Ascending aorta (tissue), 2 donors: ENCODE measurements at regions of chr3 and their contacts with region 1.

Region 1: DNA sequence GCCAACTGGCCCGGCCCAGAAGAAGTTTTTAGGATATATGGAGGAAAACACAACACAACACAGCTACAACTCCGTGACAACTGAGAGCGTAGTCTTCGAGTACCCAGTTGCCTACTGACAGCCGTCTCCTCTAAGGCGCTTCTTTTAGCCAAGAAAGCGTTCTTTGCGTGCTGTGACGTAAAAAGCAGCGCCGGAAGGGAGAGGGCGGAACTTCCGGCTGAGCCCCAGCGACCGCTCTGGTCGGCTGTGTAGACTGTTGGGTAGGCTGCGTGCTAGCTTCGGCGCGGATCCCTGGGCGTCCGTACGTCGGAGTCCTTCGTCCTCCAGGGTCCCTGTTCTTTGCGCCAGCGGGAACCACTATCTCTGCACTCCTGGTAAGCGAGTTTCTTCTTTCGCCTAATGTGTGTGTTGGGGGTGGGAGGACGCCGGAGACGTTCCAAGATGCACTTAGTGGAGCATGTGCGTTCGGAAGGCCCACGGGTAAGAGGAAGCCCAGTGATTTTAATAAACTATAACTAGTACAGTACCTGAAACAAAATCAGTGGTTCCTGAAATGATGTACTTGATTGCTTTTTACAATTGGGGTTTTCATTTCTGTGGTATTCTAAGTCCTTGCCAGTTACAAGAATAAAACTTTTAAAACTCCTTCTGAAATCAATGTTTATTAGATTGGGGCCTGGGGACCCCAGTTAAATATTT is at the start of gene TRMT10C:
- DNase-seq: peak; percentile 60 to 95
- H3K4me3 ChIP-seq: peak within 1 kb of the TSS; percentile 84 to 94
- H3K27ac ChIP-seq: peak within 1 kb of the TSS; percentile 89 to 92
- H3K4me1 ChIP-seq: peaks cover 0 to 10% of the 10 kb centered on the region in 2 donors
- H3K27me3 ChIP-seq: no peaks in the 10 kb centered on the region
- CTCF ChIP-seq: no peak
- total RNA-seq, gene TRMT10C: 5.9 TPM

Region 2: DNA sequence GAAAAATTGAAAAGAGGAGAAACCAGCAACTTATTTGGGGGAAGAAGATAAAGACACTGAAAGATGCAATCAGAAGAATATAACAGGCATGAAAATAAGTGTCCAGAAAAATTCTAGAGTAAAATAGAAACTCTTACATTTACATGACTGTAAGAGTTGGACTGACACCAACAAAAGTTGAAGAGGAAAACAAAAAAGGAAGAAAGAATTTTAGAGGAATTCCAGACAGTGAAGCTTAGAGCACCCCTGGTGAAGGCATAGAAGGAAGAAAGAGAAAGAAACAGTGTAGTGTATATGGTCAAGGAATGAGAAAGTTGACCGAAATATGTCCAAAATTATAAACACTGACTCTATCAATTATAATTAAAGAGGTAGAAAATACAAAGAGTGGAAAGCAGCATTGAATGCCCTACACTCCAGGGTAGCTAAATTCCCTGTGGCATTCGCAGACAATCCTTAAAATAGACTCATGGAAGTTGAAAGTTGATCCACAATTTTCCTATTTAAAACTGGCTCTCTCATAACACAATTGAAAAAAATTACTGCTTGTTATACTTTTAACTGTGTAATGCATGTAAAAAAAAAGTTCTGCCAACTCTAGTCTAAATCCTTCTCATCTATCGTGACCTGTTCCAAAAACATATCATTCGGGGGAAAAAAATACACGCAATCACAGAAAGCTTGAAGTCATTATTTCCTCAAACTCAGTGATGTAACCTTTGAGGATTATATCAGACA is 465.9 kb before region 1 on chr3:
- intact Hi-C with region 1: no loop called
- DNase-seq: no peak
- H3K4me3 ChIP-seq: peak overlapping the region in 1 of 2 donors; percentile 7
- H3K27ac ChIP-seq: peak overlapping the region in 1 of 2 donors; percentile 7
- H3K4me1 ChIP-seq: peaks cover 0 to 3% of the 10 kb centered on the region in 2 donors
- H3K27me3 ChIP-seq: no peaks in the 10 kb centered on the region
- CTCF ChIP-seq: no peak

Region 3: GRCh38 chr3:101478980-101479379 is 82.8 kb before region 1 on chr3:
- intact Hi-C with region 1: no loop called
- DNase-seq: no peak
- H3K4me3 ChIP-seq: no peak overlapping the region
- H3K27ac ChIP-seq: no peak overlapping the region
- H3K4me1 ChIP-seq: peaks cover 0 to 4% of the 10 kb centered on the region in 2 donors
- H3K27me3 ChIP-seq: no peaks in the 10 kb centered on the region
- CTCF ChIP-seq: no peak

Region 4: DNA sequence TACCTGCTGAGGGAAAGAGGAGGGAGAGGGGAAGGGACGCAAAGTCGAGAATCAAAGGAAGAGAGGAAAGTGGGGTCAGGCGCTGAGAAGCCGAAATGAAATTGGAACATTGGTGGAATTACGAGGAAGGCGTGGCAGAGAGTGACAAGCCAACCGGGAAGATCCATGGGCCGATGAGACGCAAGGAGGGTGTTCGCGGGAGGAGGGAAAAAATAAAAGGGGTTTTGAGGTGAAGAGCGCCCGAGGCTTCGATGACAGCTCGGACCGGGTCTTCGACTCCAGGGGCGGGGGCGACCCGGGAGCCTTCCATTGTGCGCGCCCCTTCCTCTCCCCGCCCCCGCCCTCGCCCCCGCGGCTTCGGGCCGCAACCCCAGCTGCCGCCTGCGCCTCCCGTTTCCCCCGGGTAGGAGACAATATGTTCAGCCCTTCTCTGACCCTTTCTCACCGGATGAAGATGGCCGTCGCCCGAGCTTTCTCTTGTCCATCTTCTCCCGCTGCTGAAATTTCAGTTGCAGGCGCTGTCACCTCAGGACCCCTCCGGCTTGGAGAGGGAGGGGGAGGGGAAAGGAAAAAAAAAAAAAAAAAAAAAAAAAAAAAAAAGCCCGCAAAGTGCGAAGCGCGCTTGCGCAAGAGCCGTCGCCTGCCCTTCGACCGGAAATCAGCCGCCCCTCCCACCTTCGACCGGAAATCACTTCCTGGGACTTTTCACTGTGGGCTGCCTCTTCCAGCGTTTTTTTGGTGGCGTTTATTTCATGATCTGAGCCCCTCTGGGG is 48.9 kb before region 1 on chr3 and contains the start of gene SENP7:
- intact Hi-C with region 1: loop called (anchors 2 kb)
- DNase-seq: peak; percentile 16 to 91
- H3K4me3 ChIP-seq: peak within 1 kb of the TSS; percentile 91 to 96
- H3K27ac ChIP-seq: peak within 1 kb of the TSS; percentile 91 to 92
- H3K4me1 ChIP-seq: no peaks in the 10 kb centered on the region
- H3K27me3 ChIP-seq: no peaks in the 10 kb centered on the region
- CTCF ChIP-seq: no peak
- total RNA-seq, gene SENP7: 6.1 TPM